Activated CD4-positive, alpha-beta T cell treated with anti-CD3 and anti-CD28 coated beads, Interleukin-2, amount 10 ng/mL, durations not matched to agents 24 days and 14 days (primary cell): ENCODE measurements at regions of chr12 and their contacts with region 1.

Region 1: GRCh38 chr12:49018261-49019119 is at the start of gene PRKAG1:
- DNase-seq: peak; percentile 99
- H3K4me3 Mint-ChIP-seq: peak within 1 kb of the TSS; percentile 90
- H3K27ac Mint-ChIP-seq: peak within 1 kb of the TSS; percentile 91
- H3K4me1 Mint-ChIP-seq: peaks cover 25% of the 10 kb centered on the region
- H3K27me3 Mint-ChIP-seq: no peaks in the 10 kb centered on the region
- total RNA-seq, gene PRKAG1: 75.3 and 89.8 TPM in 2 replicates

Region 2: DNA sequence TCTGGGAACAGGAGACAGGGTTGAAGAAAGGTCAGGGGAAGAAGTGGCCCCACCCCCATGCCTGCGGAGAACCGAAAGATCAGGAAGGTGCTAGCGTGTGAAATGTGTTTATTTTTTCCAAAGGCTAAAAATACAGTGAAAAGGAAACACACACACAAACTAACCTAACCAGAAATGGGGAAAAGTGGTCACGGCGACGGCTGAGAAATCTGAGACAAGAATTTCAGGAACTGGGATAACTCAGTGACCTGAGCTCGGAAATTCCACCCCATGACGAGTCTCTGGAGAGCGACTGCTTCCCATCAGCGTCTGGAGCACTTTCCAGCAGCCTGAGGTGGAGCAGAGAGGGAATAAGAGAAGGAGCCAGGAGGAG is 136.2 kb before region 1 on chr12:
- intact Hi-C with region 1: no loop called
- DNase-seq: no peak
- H3K4me3 Mint-ChIP-seq: no peak overlapping the region
- H3K27ac Mint-ChIP-seq: no peak overlapping the region
- H3K4me1 Mint-ChIP-seq: peaks cover 8% of the 10 kb centered on the region
- H3K27me3 Mint-ChIP-seq: peaks cover 38% of the 10 kb centered on the region

Region 3: DNA sequence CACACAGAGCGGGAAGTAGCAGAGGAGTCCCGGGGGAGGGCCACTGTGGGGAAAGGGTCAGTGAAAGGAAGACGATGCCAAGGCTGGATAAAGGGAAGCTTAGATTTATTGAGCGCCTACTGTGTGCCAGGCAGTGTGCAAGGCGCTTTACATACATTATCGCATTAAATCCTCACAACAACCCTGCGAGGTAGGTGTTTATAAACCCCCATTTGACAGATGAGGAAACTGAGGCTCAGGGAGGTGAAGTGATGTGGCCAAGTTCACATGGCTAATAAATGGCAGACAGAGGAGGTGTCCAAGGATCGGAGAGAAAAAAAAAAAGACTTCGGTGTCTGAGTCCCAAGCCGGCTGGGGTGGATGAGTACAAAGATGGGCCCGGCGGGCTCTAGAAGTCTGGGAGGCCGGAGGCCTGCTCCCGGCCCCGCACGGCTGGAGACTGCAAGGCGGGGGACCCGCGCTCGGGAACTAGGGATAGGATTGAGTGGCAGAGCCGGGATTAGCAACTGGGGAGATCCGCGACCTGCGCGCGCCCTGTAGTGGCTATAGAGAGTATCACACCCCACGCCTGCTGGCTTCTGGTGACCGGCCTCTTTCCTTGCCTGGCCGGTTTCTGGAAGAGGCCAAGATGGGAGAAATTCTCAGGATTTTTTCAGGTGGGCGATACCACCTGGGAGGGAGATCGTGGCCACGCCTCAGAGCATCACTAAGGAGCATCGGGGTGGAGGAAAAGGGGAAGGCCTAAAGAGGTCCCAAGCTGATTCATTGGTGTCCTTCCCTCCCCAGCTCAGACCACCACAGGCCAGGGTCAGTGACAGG is 23.2 kb before region 1 on chr12:
- intact Hi-C with region 1: loop called (anchors 1 kb)
- DNase-seq: peak; percentile 87
- H3K4me3 Mint-ChIP-seq: peak overlapping the region; percentile 25
- H3K27ac Mint-ChIP-seq: no peak overlapping the region
- H3K4me1 Mint-ChIP-seq: peaks cover 30% of the 10 kb centered on the region
- H3K27me3 Mint-ChIP-seq: peaks cover 54% of the 10 kb centered on the region